ENCODE measurements at regions of chr15 and their contacts with region 1.

Region 1: DNA sequence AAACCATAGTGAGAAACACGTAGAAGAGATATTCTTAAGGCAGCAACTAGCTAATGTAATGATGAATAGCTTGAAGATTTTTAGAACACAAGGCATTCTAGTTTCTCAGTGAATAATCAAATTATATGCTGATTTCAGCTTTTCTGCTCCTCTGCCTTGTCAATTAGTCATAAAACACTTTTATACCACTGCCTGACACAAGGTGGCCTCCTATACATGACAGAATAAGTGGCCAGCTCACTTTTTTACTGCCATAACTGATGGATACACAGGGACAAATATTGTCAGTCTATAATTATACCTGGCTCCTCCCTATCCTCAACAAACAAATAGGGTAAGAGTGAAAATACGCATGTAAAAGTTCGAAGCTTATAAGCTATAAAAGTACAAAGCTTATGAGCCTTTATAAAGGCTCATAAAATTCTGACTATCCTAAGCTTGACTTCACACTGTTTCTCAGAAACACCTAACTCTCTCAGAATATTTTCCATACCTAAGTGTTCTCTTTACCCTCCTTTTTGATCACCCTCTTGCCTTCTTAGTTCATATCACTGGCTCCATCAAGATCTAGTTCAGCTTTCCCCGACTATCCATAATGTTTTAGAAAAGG is 81.6 kb downstream of the HERC1 start:
- DNase-seq: peak in 22 of 35 experiments; percentile 9 to 71 (median 30)
- ATAC-seq: peak; percentile 58 to 77 (median 74)
- H3K4me3 ChIP-seq: no peak overlapping the region
- H3K4me3 Mint-ChIP-seq: no peak overlapping the region
- H3K27ac ChIP-seq: no peak overlapping the region
- H3K27ac Mint-ChIP-seq: peak overlapping the region; percentile 41 to 79
- H3K4me1 ChIP-seq: peaks cover 0 to 10% of the 10 kb centered on the region in 2 experiments
- H3K4me1 Mint-ChIP-seq: peaks cover 0 to 8% (median 6%) of the 10 kb centered on the region in 3 donors
- H3K27me3 ChIP-seq: no peaks in the 10 kb centered on the region
- H3K27me3 Mint-ChIP-seq: no peaks in the 10 kb centered on the region

Region 2: GRCh38 chr15:63610200-63610841 is 141.9 kb before region 1 on chr15:
- CTCF ChIA-PET with region 1: interaction called in 1 of 2 experiments, 14 read pairs
- POLR2A ChIA-PET with region 1: no interaction called
- DNase-seq: peak; percentile 27 to 84 (median 66)
- ATAC-seq: peak; percentile 80 to 82 (median 81)
- H3K4me3 ChIP-seq: no peak overlapping the region
- H3K4me3 Mint-ChIP-seq: peak overlapping the region in 1 of 3 donors; percentile 24
- H3K27ac ChIP-seq: peak overlapping the region; percentile 79
- H3K27ac Mint-ChIP-seq: peak overlapping the region; percentile 96 to 98
- H3K4me1 ChIP-seq: peaks cover 19 to 34% of the 10 kb centered on the region in 2 experiments
- H3K4me1 Mint-ChIP-seq: peaks cover 35 to 51% (median 44%) of the 10 kb centered on the region in 3 donors
- H3K27me3 ChIP-seq: no peaks in the 10 kb centered on the region
- H3K27me3 Mint-ChIP-seq: no peaks in the 10 kb centered on the region

Region 3: GRCh38 chr15:63891079-63891767 is 139.0 kb after region 1 on chr15:
- CTCF ChIA-PET with region 1: interaction called, 5 to 15 read pairs
- POLR2A ChIA-PET with region 1: no interaction called
- DNase-seq: peak; percentile 27 to 86 (median 62)
- ATAC-seq: no peak
- H3K4me3 ChIP-seq: no peak overlapping the region
- H3K4me3 Mint-ChIP-seq: peak overlapping the region in 1 of 3 donors; percentile 50
- H3K27ac ChIP-seq: peak overlapping the region; percentile 38
- H3K27ac Mint-ChIP-seq: peak overlapping the region; percentile 90 to 94
- H3K4me1 ChIP-seq: peaks cover 45 to 68% of the 10 kb centered on the region in 2 experiments
- H3K4me1 Mint-ChIP-seq: peaks cover 68 to 72% (median 69%) of the 10 kb centered on the region in 3 donors
- H3K27me3 ChIP-seq: no peaks in the 10 kb centered on the region
- H3K27me3 Mint-ChIP-seq: no peaks in the 10 kb centered on the region

Region 4: GRCh38 chr15:64046347-64047153 is 294.4 kb after region 1 on chr15 and contains the start of gene DAPK2:
- CTCF ChIA-PET with region 1: interaction called, 11 to 27 read pairs
- POLR2A ChIA-PET with region 1: no interaction called
- DNase-seq: peak in 34 of 35 experiments; percentile 14 to 82 (median 44)
- ATAC-seq: peak; percentile 89 to 93 (median 92)
- H3K4me3 ChIP-seq: peak within 1 kb of the TSS; percentile 49 to 55
- H3K4me3 Mint-ChIP-seq: peak within 1 kb of the TSS; percentile 70 to 81 (median 71)
- H3K27ac ChIP-seq: no peak within 1 kb of the TSS
- H3K27ac Mint-ChIP-seq: no peak within 1 kb of the TSS
- H3K4me1 ChIP-seq: peaks cover 0 to 17% of the 10 kb centered on the region in 2 experiments
- H3K4me1 Mint-ChIP-seq: peaks cover 7 to 28% (median 11%) of the 10 kb centered on the region in 3 donors
- H3K27me3 ChIP-seq: peaks cover 0 to 41% of the 10 kb centered on the region in 2 experiments
- H3K27me3 Mint-ChIP-seq: peaks cover 7 to 13% of the 10 kb centered on the region in 2 donors
- total RNA-seq, gene DAPK2: 0.78 to 23.5 (median 6.1) TPM

Region 5: DNA sequence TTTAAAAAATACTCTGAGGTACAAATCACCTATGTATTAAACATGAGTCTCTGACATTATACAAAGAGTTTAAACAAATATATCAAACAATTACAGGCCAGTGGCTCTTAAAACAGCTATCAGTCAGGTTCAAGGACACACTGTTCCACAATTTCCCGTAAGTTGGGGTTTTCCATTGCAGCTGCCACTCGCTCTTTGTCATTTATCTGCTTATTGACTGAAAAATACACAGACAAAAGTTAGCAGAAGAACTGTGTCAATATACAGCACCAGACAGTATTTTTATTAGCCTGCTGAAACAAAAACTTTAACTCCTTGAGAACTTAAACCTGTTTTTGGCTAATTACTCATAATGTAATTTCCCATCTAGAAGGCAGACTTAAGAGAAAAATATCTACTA is 320.6 kb after region 1 on chr15:
- CTCF ChIA-PET with region 1: interaction called, 24 to 109 read pairs
- POLR2A ChIA-PET with region 1: interaction called in 1 of 2 experiments, 5 read pairs
- DNase-seq: no peak
- ATAC-seq: no peak
- H3K4me3 ChIP-seq: no peak overlapping the region
- H3K4me3 Mint-ChIP-seq: no peak overlapping the region
- H3K27ac ChIP-seq: no peak overlapping the region
- H3K27ac Mint-ChIP-seq: peak overlapping the region in 1 of 2 donors; percentile 8
- H3K4me1 ChIP-seq: peaks cover 5 to 6% of the 10 kb centered on the region in 2 experiments
- H3K4me1 Mint-ChIP-seq: peaks cover 6 to 14% (median 10%) of the 10 kb centered on the region in 3 donors
- H3K27me3 ChIP-seq: no peaks in the 10 kb centered on the region
- H3K27me3 Mint-ChIP-seq: no peaks in the 10 kb centered on the region